ENCODE measurements at regions of chr20 and their contacts with region 1.

Region 1: DNA sequence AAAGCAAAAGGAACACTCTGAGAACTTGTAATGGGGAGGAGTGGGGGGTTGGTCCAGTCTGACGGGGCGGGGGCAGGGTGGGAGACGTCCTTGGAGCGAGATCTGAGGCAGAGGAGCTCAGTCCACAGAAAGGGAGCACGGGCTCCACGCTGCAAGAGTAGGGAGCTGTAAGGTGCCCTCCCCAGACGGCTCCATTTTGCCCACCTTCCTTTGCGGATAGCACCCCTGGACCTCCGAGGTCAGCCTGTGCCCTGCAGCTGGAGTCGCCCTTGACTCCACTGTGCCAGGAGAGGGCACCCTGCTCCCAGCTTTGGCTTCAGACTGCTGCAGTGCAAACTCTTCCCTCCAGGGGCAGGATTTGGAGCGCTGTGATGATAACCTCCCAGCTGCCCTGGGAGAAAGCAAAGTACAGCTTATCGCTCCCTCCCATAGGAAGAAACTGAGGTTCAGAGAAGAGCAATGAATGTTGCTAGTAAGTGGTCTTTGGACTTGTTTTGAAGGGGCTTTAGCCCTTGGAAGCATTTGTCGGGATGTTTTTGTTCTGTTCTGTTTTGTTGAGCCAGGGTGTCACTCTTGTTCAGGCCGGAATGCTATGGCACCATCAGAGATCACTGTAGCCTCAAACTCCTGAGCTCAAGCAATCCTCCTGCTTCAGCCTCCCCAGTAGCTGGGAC is 9.5 kb upstream of the AHCY start:
- DNase-seq: peak; percentile 93
- H3K27ac ChIP-seq: peak overlapping the region; percentile 0; the same call in 1 of the 2 replicates
- CTCF ChIP-seq: peak; percentile 100

Region 2: GRCh38 chr20:34262488-34263288 is 50.0 kb before region 1 on chr20:
- CTCF ChIA-PET with region 1: no interaction called
- POLR2A ChIA-PET with region 1: no interaction called
- DNase-seq: no peak
- H3K27ac ChIP-seq: 0 out of 2 replicates have a peak overlapping the region, but pooled peaks have one; percentile 13
- CTCF ChIP-seq: no peak

Region 3: DNA sequence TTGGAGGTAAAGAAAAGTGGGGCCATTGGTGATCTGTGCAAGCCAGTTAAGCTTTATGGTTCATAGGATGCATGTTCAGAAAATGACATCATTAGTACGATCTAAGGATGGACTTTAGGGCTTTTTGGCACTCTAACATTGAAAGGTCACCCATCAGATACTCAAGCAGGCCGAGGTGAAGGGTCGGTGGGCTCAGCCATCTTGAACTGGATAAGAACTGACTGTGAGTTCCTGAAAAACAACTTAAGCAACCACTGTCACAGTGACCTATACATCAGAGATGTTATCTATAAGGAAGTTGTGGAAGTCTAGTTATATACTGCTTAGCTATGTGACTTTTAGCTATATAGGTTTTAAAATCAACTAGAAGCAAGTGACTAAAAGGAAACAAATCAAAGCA is 37.4 kb after region 1 on chr20:
- CTCF ChIA-PET with region 1: interaction called, 11 read pairs
- POLR2A ChIA-PET with region 1: no interaction called
- DNase-seq: no peak
- H3K27ac ChIP-seq: no peak overlapping the region
- CTCF ChIP-seq: no peak

Region 4: DNA sequence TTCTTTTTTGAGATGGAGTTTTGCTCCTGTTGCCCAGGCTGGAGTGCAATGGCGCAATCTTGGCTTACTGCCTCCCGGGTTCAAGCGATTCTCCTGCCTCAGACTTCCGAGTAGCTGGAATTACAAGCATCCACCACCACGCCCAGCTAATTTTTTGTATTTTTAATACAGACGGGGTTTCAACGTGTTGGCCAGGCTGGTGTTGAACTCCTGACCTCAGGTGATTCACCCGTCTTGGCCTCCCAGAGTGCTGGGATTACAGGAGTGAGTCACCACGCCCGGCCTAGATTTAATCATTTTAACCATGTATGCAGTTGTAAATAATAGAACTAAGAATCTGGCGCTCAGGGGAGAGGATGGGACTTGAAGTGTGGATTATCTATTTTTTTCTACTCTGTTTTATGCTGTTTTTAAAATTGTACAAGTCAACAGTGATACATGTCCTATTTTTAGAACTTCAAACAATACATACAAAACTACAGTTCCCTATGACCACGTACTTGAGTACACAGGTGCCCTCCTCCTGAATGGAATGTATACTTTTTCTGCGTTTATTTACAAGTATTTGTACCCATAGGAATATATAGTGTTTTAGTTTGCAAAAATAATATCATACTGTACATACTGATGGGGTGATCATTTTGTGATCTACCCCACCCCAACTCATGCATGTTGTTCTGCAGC is 78.2 kb after region 1 on chr20:
- CTCF ChIA-PET with region 1: interaction called, 18 read pairs
- POLR2A ChIA-PET with region 1: no interaction called
- DNase-seq: peak; percentile 83
- H3K27ac ChIP-seq: peak overlapping the region; percentile 78
- CTCF ChIP-seq: no peak

Region 5: DNA sequence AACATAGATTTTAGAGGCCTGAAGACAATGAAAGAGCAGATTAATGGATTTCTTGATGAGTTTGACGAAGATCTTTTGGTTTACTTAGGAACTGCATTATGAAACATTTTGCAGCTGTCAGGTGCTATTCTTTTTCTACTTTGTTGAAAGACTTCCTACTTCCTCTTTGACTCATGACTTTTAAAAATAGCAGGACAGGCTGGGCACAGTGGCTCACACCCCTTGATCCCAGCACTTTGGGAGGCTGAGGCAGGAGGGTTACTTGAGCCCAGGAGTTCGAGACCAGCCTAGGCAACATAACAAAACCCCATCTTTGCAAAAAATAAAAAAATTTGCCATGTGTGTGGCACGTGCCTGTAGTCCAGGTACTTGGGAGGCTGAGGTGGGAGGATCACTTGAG is 102.4 kb after region 1 on chr20:
- CTCF ChIA-PET with region 1: interaction called, 58 read pairs
- POLR2A ChIA-PET with region 1: interaction called, 3 read pairs
- DNase-seq: no peak
- H3K27ac ChIP-seq: peak overlapping the region; percentile 25; the same call in 1 of the 2 replicates
- CTCF ChIP-seq: no peak

Region 6: GRCh38 chr20:34437330-34437986 is 124.8 kb after region 1 on chr20:
- CTCF ChIA-PET with region 1: interaction called, 27 read pairs
- POLR2A ChIA-PET with region 1: no interaction called
- DNase-seq: no peak
- H3K27ac ChIP-seq: peak overlapping the region; percentile 37
- CTCF ChIP-seq: no peak

Region 7: DNA sequence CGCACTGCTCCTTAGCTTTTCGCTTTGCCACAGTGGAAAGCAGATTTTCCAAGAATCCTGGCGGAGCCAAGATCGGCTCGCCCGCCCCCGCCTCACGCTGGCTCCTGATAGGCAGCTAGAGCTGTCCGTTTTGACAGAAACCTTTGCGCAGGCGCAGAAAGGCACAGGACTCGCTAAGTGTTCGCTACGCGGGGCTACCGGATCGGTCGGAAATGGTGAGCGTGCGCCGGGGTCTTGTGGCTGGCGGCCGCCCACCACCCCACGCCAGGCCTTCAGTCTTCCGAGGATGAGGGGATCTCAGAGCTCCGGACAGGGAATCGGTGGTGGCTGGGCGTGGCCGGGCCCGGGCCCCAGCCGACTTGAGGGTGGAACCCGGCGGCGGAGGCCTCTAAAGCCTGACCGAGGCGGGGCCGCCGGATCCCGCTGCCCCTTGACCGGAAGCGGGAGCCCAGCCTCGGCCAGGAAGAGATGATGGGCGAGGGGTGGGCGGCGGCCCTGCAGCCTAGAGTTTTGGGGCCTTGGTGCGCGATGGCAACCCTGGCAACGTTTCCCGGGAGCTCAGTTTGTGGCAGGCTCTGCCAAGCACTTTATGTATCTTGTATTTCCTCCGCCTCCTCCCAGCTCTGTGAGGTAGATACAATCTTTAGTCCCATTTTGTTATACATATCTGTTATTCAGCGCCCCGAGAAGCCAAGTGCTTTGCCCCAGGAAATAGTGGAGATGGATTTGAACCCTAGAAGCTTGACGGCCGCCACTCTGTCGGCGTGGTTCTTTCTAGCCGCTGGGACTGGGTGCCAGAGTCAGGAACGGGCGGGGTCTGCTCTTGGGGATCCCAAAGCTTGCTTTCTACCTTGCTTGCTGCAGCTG is 203.8 kb after region 1 on chr20 and contains the start of gene DYNLRB1:
- CTCF ChIA-PET with region 1: interaction called, 28 read pairs
- POLR2A ChIA-PET with region 1: interaction called, 10 read pairs
- DNase-seq: peak; percentile 98
- H3K27ac ChIP-seq: peak within 1 kb of the TSS; percentile 99
- CTCF ChIP-seq: no peak

Region 8: GRCh38 chr20:34704177-34705007 is 391.7 kb after region 1 on chr20 and contains the start of gene TP53INP2:
- CTCF ChIA-PET with region 1: interaction called, 11 read pairs
- POLR2A ChIA-PET with region 1: no interaction called
- DNase-seq: peak; percentile 94
- H3K27ac ChIP-seq: peak within 1 kb of the TSS; percentile 89
- CTCF ChIP-seq: no peak